AG04449 (cell line): ENCODE measurements at regions of chr6 and their contacts with region 1.

Region 1: GRCh38 chr6:121856296-121856695 is 420.9 kb downstream of the GJA1 start:
- DNase-seq: peak; percentile 42
- H3K4me3 ChIP-seq: no peak overlapping the region
- CTCF ChIP-seq: no peak

Region 2: GRCh38 chr6:120511712-120512111 is 1344.6 kb before region 1 on chr6:
- CTCF ChIA-PET with region 1: no interaction called
- POLR2A ChIA-PET with region 1: no interaction called
- DNase-seq: no peak
- H3K4me3 ChIP-seq: no peak overlapping the region
- CTCF ChIP-seq: no peak

Region 3: DNA sequence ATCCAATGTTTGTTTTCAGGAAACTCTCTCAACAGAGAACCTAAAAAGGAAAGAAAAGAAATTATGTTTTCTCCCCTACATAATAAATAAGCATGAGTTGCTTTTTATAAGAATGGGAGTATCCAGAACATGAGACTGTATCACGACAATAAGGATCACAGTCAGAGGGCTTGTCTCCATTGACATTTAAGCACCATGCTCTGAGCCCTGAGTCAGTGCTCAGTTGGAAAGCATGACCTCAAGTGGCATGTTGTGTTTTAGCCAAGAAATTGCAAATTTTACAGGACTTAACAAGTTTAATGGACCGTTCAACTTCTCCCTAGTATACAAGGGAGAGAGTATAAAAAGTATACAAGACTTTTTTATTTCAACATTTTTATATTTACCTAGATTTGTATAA is 10.8 kb after region 1 on chr6:
- CTCF ChIA-PET with region 1: interaction called, 13 read pairs
- POLR2A ChIA-PET with region 1: no interaction called
- DNase-seq: no peak
- H3K4me3 ChIP-seq: no peak overlapping the region
- CTCF ChIP-seq: no peak